ENCODE measurements at regions of chr2 and their contacts with region 1.

Region 1: DNA sequence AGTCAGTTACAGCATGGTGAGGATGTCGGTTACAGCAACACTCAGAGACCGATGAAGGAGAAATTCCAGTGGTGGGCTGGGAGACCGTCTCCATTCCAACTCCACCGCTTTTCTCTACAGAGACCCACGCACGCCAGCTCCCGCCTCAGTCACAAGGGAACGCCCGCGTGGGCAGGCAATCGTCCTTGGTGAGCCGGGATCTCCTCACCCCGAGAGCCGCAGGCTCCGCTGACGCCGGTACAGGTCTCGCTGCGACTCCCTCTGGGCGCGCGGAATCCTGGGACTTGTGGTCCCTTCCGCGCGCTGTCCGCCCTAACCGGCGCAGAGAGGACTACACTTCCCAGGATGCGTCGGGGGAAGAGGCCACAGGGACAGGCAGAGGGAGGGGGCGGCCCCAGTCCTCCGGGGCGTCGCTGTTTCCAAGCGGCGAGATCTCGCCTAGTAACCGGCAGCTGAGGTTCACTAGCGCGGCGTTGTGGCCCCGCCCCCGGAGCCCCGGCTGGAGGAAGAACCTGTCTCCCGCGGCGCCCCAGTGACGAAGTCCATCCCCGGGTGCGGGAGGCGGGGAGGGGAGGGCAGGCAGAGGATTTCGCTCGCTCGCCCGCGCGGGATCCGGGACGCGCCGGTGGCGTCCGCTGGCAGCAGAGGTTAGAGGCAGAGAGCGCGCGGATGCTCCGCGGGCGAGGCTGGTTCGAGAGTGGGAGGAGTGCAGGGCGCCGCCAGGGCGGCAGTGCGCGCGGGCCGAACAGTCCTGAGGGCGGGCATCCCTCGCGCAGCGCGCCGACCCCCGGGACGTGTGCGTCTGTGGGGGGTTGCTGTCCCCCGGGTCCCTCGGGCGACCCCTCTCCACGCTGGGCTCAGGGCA is at the start of gene EML6:
- DNase-seq: peak; percentile 99
- H3K4me3 Mint-ChIP-seq: peak within 1 kb of the TSS; percentile 87
- H3K27ac Mint-ChIP-seq: peak within 1 kb of the TSS; percentile 49
- H3K4me1 Mint-ChIP-seq: peaks cover 14% of the 10 kb centered on the region
- H3K27me3 Mint-ChIP-seq: peaks cover 71% of the 10 kb centered on the region
- total RNA-seq, gene EML6: 0.37 and 0.44 TPM in 2 replicates

Region 2: DNA sequence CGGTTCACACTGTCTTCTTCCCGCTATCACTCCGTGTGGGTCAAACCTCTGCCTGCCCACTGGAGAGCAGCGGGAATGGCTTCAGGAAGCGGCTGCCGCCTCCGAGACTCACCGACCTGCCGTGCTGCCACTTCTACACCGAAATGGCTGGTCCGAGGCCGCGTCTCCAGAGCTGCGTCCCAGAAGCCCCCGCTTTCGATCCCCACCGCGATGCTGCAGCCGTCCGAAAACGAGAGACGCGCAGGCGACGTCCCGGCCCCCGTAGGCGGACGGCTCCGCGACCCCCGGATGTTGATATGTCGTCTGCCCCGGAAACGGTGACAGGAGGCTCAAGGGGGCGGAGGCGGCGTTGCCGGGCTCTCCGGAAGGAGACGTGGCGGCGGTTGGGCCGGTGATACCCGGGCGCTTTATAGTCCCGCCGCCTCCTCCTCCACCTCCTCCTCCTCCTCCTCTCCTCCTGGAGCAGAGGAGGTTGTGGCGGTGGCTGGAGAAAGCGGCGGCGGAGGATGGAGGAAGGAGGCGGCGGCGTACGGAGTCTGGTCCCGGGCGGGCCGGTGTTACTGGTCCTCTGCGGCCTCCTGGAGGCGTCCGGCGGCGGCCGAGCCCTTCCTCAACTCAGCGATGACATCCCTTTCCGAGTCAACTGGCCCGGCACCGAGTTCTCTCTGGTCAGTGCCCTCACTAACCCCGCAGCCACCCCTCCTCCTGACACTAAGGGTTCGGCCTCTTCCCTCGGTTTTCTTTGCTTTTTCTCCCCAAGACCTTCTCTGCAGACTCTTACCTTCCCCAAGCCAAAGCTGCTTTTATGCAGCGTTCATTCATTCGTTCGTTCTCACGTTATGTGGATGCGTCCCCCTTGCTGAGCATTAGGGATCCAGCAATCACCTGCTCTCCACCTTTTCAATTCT is 936.4 kb before region 1 on chr2 and contains the starts of genes ASB3 and ERLEC1:
- intact Hi-C with region 1: loop called (anchors 5 kb)
- DNase-seq: peak; percentile 87
- H3K4me3 Mint-ChIP-seq: peak within 1 kb of the TSS; percentile 99
- H3K27ac Mint-ChIP-seq: peak within 1 kb of the TSS; percentile 98
- H3K4me1 Mint-ChIP-seq: peaks cover 47% of the 10 kb centered on the region
- H3K27me3 Mint-ChIP-seq: no peaks in the 10 kb centered on the region
- total RNA-seq, gene ASB3: 18.6 and 21.5 TPM in 2 replicates
- total RNA-seq, gene ERLEC1: 28.4 and 29.6 TPM in 2 replicates

Region 3: DNA sequence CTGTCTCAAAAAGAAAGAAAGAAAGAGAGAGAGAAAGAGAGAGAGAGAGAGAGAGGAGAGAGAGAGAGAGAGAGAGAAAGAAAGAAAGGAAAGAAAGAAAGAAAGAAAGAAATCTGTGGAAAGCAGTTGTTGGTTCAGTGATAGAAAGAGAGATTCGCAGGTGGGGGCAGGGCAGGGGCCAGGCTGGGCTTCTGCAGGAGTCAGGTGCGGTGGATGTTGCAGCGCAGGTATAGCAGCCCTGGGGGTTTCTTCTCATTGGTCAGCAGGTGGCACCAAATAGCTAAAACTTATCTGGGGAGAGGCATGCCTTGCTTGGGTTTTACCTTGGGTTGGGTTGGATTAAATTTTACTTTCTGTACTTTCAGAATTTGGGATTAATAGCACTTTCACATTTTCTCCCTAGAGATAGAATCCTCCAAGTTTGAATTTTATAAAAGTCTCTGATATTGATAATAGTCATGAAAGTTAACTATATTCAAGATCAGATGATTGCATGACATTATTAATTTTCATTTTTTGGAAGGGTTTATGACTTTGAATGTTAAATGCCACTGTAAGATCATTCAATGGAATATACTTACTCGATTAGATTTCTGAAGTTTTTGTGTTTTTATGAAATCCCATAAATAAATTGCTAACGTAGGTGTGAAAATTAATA is 200.6 kb before region 1 on chr2:
- intact Hi-C with region 1: loop called (anchors 1 kb)
- DNase-seq: peak; percentile 49
- H3K4me3 Mint-ChIP-seq: no peak overlapping the region
- H3K27ac Mint-ChIP-seq: no peak overlapping the region
- H3K4me1 Mint-ChIP-seq: peaks cover 26% of the 10 kb centered on the region
- H3K27me3 Mint-ChIP-seq: peaks cover 24% of the 10 kb centered on the region

Region 4: DNA sequence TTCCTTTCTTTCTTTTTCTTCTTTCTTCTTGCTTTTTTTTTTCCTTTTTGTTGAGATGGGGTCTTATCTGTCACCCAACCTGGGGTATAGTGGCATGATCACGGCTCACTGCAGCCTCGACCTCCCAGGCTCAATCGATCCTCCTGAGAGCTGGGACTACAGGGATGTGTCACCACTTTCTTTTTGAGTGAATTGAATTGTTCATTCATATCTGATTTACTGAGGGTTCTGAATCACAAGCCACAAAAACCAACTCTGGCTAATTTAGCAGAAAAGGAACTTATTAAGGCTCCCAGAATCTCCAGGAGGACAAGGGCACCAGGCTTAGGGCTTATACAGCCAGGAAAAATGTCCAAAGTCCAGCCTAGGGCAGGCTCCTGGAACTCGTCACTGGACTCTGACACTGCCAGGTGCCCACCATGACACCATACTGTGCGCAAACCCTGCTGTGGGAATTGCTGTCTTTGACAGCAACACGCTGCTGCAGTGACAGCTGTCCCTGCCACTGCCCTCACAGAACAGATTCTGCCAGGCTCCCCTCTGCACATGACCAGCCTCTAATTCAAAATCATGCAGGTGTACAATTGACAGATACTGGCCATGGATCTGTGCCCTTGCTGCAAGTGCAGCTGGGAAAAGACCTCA is 42.8 kb before region 1 on chr2:
- intact Hi-C with region 1: loop called (anchors 1 kb)
- DNase-seq: peak; percentile 39
- H3K4me3 Mint-ChIP-seq: peak overlapping the region; percentile 78
- H3K27ac Mint-ChIP-seq: peak overlapping the region; percentile 65
- H3K4me1 Mint-ChIP-seq: peaks cover 59% of the 10 kb centered on the region
- H3K27me3 Mint-ChIP-seq: peaks cover 33% of the 10 kb centered on the region

Region 5: GRCh38 chr2:54899576-54900200 is 176.3 kb after region 1 on chr2:
- intact Hi-C with region 1: loop called (anchors 5 kb)
- DNase-seq: no peak
- H3K4me3 Mint-ChIP-seq: no peak overlapping the region
- H3K27ac Mint-ChIP-seq: no peak overlapping the region
- H3K4me1 Mint-ChIP-seq: peaks cover 24% of the 10 kb centered on the region
- H3K27me3 Mint-ChIP-seq: no peaks in the 10 kb centered on the region

Region 6: DNA sequence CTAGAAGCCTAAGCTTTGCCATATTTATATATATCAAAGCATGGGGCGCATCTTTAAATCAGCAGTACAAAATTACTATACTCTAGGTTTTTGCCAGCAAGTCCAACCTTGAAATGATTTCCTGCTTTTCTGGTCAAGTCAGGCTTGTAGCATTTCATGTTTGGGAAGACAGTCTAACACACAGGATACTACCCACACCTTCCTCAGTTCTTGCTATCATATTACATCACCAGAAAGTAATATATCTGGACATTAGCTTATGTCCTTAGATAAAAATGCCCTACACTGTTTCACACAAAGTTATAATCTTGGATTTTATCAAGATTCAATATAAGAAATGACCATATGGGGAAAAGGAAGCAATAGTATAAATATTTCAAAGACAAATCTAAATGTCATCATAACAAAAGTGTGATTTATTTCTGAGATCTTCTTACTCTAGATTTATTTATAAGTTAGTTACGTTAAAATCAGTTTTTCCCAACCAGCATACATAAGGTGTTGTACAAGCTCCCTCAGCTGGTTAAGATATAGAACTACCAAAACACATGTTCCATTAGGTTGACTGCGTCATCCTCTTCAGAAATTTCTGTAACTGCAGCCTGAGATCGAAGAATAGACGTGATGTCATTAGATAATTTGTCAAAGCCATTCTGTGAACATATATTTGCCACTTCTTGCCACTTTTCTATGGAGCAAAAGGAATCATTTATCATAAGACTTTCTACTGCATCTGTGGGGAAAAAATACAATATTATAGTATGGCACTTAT is 452.1 kb after region 1 on chr2:
- intact Hi-C with region 1: loop called (anchors 10 kb)
- DNase-seq: no peak
- H3K4me3 Mint-ChIP-seq: no peak overlapping the region
- H3K27ac Mint-ChIP-seq: no peak overlapping the region
- H3K4me1 Mint-ChIP-seq: no peaks in the 10 kb centered on the region
- H3K27me3 Mint-ChIP-seq: no peaks in the 10 kb centered on the region

Region 7: GRCh38 chr2:55617175-55618024 is 894.0 kb after region 1 on chr2 and contains the start of gene PPP4R3B:
- intact Hi-C with region 1: loop called (anchors 1 kb)
- DNase-seq: peak; percentile 99
- H3K4me3 Mint-ChIP-seq: no peak within 1 kb of the TSS
- H3K27ac Mint-ChIP-seq: no peak within 1 kb of the TSS
- H3K4me1 Mint-ChIP-seq: peaks cover 38% of the 10 kb centered on the region
- H3K27me3 Mint-ChIP-seq: no peaks in the 10 kb centered on the region
- total RNA-seq, gene PPP4R3B: 69.8 and 74.6 TPM in 2 replicates

Measured in activated T-helper 1 cell treated with anti-CD3 and anti-CD28 coated beads, Interleukin-12 subunit alpha, Interleukin-12 subunit beta, Interleukin-2, Interleukin-4 antibody, amounts not matched to agents 30 ng/mL and 10 ng/mL and 1 ng/mL, durations not matched to agents 14 hours and 24 hours and 36 hours (primary cell).